ENCODE measurements at regions of chr15 and their contacts with region 1.

Region 1: GRCh38 chr15:80970018-80970658 is 19.5 kb downstream of the MESD start:
- DNase-seq: peak; percentile 59 to 79
- ATAC-seq: peak; percentile 83 to 93
- H3K4me3 ChIP-seq: no peak overlapping the region
- H3K27ac ChIP-seq: no peak overlapping the region
- H3K4me1 ChIP-seq: no peaks in the 10 kb centered on the region
- CTCF ChIP-seq: peak; percentile 98
- EP300 ChIP-seq: no peak
- POLR2A ChIP-seq: no peak
- RAD21 ChIP-seq: peak; percentile 98 to 99

Region 2: DNA sequence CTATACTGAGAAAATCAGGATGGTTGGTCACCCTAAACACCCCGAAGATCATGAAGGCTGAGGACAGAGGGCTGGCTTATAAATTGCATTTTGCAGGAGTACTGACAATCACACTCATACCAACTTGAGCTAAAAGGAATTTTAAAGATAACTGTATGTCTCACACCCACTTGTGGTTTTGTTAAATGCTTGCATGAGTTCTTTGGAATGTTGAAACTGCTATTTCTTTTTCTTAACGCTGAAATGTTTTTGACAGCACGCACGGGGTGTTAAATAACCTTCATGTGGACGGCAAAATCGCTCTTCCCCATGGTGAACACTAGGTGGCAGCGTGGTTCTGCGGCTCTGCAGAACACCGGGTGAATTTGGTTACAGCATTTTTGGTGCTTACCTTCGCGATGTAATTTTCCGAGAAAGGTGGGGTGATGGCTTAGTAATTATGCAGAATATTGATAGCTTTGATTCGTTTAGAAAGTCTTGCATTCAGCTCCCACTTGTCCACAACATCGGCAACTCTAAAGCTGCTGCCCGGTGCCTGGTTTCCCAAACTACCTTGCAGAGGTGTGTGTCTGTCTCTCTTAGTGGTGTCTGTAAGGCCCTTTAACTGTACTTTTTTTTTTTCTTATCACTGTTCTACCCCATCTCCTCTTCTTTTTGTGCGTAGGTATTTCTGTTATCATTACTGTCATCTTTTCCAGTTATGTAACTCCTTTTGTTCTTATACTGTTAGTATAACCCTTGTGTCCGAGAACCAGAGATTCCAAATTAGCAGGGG is 514.3 kb before region 1 on chr15:
- CTCF ChIA-PET with region 1: interaction called, 94 read pairs
- POLR2A ChIA-PET with region 1: no interaction called
- DNase-seq: peak; percentile 78 to 83
- ATAC-seq: peak; percentile 79 to 92
- H3K4me3 ChIP-seq: no peak overlapping the region
- H3K27ac ChIP-seq: no peak overlapping the region
- H3K4me1 ChIP-seq: peaks cover 14% of the 10 kb centered on the region
- CTCF ChIP-seq: peak; percentile 99
- EP300 ChIP-seq: no peak
- POLR2A ChIP-seq: no peak
- RAD21 ChIP-seq: peak; percentile 98 to 99

Region 3: GRCh38 chr15:80684697-80685096 is 285.4 kb before region 1 on chr15:
- CTCF ChIA-PET with region 1: interaction called, 10 read pairs
- POLR2A ChIA-PET with region 1: no interaction called
- DNase-seq: peak in 1 of 2 experiments; percentile 18
- ATAC-seq: no peak; a peak in 1 of 6 replicates
- H3K4me3 ChIP-seq: no peak overlapping the region
- H3K27ac ChIP-seq: no peak overlapping the region
- H3K4me1 ChIP-seq: no peaks in the 10 kb centered on the region
- CTCF ChIP-seq: no peak
- EP300 ChIP-seq: no peak
- POLR2A ChIP-seq: no peak
- RAD21 ChIP-seq: no peak

Region 4: GRCh38 chr15:80844011-80844755 is 126.0 kb before region 1 on chr15:
- CTCF ChIA-PET with region 1: interaction called, 15 read pairs
- POLR2A ChIA-PET with region 1: no interaction called
- DNase-seq: peak in 1 of 2 experiments; percentile 34
- ATAC-seq: peak; percentile 46; a peak in 2 of 6 replicates
- H3K4me3 ChIP-seq: no peak overlapping the region
- H3K27ac ChIP-seq: peak overlapping the region in 1 of 2 experiments; percentile 42; a peak in 2 of 6 replicates
- H3K4me1 ChIP-seq: peaks cover 30% of the 10 kb centered on the region
- CTCF ChIP-seq: no peak
- EP300 ChIP-seq: no peak
- POLR2A ChIP-seq: no peak
- RAD21 ChIP-seq: no peak

Region 5: DNA sequence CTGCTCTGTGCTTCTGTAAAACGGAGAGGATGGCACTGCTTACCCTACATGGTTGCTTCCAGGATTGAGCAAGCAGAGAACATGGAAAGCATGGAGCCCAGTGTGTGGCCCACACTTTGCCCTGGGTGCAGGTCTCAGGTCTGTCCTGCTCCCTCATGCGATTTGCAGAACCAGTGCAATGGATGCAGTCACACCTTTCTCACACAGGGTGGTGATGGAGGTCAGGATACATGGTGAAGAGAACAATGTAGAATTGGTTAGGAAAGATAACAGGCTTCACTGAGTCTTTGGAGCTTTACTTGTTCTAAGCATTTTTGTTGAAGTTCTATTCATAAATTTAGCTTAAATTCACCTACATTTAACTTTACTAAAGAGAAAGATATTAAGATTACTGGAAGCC is 59.1 kb before region 1 on chr15:
- CTCF ChIA-PET with region 1: interaction called, 17 read pairs
- POLR2A ChIA-PET with region 1: no interaction called
- DNase-seq: no peak
- ATAC-seq: no peak
- H3K4me3 ChIP-seq: no peak overlapping the region
- H3K27ac ChIP-seq: no peak overlapping the region
- H3K4me1 ChIP-seq: peaks cover 4% of the 10 kb centered on the region; the same call in 1 of the 3 replicates
- CTCF ChIP-seq: no peak
- EP300 ChIP-seq: no peak
- POLR2A ChIP-seq: no peak
- RAD21 ChIP-seq: no peak

Region 6: GRCh38 chr15:80989518-80990478 is 19.7 kb after region 1 on chr15 and contains the start of gene MESD:
- CTCF ChIA-PET with region 1: interaction called, 28 read pairs
- POLR2A ChIA-PET with region 1: no interaction called
- DNase-seq: peak; percentile 97
- ATAC-seq: peak; percentile 95 to 99
- H3K4me3 ChIP-seq: peak within 1 kb of the TSS; percentile 78
- H3K27ac ChIP-seq: peak within 1 kb of the TSS; percentile 87 to 89
- H3K4me1 ChIP-seq: peaks cover 18% of the 10 kb centered on the region; the same call in 2 of the 3 replicates
- CTCF ChIP-seq: no peak
- EP300 ChIP-seq: no peak
- POLR2A ChIP-seq: peak; percentile 97
- RAD21 ChIP-seq: no peak
- polyA plus RNA-seq, gene MESD: 29.6 and 35.6 TPM in 2 replicates

Region 7: GRCh38 chr15:81211376-81211775 is 241.2 kb after region 1 on chr15:
- CTCF ChIA-PET with region 1: no interaction called
- POLR2A ChIA-PET with region 1: no interaction called
- DNase-seq: no peak
- ATAC-seq: no peak
- H3K4me3 ChIP-seq: no peak overlapping the region
- H3K27ac ChIP-seq: no peak overlapping the region
- H3K4me1 ChIP-seq: no peaks in the 10 kb centered on the region
- CTCF ChIP-seq: no peak
- EP300 ChIP-seq: no peak
- POLR2A ChIP-seq: no peak
- RAD21 ChIP-seq: no peak

Measured in A549 (cell line).